HepG2 (cell line): ENCODE measurements at regions of chr2 and their contacts with region 1.

Region 1: DNA sequence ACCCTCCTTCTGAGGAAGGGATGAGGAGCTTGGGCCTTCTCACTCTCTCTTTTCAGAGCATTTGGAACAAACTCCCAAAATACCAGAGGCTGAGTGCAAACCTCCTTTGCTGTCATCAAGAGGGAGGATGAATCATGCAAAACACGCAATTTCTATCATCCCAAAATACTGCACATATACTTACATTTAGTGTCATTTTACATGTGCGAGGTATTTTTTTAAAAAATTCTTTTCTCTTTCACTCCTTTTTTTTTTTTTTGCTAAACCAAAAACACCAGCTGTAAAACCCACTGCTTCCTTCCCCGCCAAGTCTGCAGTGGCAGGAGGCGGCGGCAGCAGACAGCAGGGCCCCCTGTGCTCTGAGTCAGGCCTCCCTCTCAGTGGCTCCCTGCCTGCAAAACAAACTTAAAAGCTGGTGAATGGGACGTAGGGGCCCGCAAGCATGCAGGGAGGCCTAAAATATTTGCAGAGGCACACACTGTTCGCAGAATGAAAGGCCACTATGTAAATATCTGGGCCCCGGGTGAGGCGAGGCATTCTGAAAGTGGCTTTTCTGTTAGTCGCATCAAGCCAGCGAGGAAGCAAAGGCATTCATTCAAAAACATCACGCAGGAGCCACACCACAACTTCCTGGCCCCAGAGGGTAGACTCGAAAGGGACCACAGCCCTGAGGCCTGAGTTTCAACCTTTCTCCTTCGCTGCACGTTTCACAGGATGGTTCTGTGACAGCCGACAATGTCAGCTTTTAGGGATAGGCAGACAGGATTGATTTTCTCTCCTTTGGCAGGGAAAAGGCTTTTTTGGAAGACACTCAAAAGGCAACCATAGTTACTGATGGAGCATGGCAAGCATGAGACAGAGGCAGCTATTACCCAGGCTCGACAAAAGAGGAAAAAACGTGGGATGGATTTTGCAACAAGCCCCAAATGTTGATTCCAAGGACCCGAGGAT is 73.4 kb downstream of the ACTR2 start:
- DNase-seq: peak; percentile 96
- ATAC-seq: peak; percentile 93
- H3K4me3 ChIP-seq: peak overlapping the region; percentile 55 to 68 (median 58)
- H3K27ac ChIP-seq: peak overlapping the region; percentile 47
- H3K4me1 ChIP-seq: peaks cover 52% of the 10 kb centered on the region
- H3K27me3 ChIP-seq: no peaks in the 10 kb centered on the region
- CTCF ChIP-seq: peak; percentile 41
- EP300 ChIP-seq: peak; percentile 50 to 93; a peak in 2 of 4 replicates
- POLR2A ChIP-seq: no peak
- RAD21 ChIP-seq: 0 out of 2 replicates have a peak, but pooled peaks have one; percentile 19

Region 2: GRCh38 chr2:65264821-65265670 is 36.0 kb before region 1 on chr2:
- CTCF ChIA-PET with region 1: no interaction called
- POLR2A ChIA-PET with region 1: no interaction called
- in situ Hi-C with region 1: no loop called
- intact Hi-C with region 1: loop called (anchors 2 kb)
- DNase-seq: peak; percentile 84
- ATAC-seq: peak; percentile 79
- H3K4me3 ChIP-seq: no peak overlapping the region
- H3K27ac ChIP-seq: no peak overlapping the region
- H3K4me1 ChIP-seq: no peaks in the 10 kb centered on the region
- H3K27me3 ChIP-seq: no peaks in the 10 kb centered on the region
- CTCF ChIP-seq: peak; percentile 87
- EP300 ChIP-seq: no peak
- POLR2A ChIP-seq: no peak
- RAD21 ChIP-seq: peak; percentile 84; the same call in 1 of the 2 replicates

Region 3: DNA sequence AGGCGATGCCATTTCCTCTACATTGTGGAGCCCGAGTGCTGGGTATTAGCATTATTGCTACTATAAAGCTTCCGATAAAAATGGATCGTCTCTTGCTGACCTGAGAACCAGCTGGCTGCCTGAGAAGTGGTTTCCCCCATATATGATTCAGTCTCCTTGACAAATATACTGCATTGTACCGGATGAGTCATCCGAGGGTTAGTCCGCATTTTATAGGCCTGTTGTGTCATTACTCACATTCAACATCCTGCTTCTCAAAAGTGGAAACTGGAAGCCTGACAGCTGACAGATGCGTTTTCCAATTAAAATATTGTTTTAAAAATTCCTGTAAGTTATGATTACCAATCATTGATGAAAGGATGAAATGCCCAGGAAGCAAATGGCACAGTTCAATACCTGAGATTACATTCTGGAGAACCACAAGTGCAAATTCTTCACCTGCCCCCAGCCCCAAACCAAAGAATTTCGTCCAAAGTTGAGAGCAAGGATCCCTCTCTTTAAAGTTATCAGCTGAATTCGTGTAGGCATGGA is 65.6 kb after region 1 on chr2:
- CTCF ChIA-PET with region 1: no interaction called
- POLR2A ChIA-PET with region 1: interaction called, 8 read pairs
- in situ Hi-C with region 1: no loop called
- intact Hi-C with region 1: loop called (anchors 5 kb)
- DNase-seq: peak; percentile 77
- ATAC-seq: no peak
- H3K4me3 ChIP-seq: no peak overlapping the region
- H3K27ac ChIP-seq: peak overlapping the region; percentile 11
- H3K4me1 ChIP-seq: peaks cover 100% of the 10 kb centered on the region
- H3K27me3 ChIP-seq: no peaks in the 10 kb centered on the region
- CTCF ChIP-seq: no peak
- EP300 ChIP-seq: peak in 1 of 2 experiments; percentile 31; a peak in 1 of 4 replicates
- POLR2A ChIP-seq: no peak
- RAD21 ChIP-seq: no peak